ENCODE measurements at regions of chr12 and their contacts with region 1.

Region 1: DNA sequence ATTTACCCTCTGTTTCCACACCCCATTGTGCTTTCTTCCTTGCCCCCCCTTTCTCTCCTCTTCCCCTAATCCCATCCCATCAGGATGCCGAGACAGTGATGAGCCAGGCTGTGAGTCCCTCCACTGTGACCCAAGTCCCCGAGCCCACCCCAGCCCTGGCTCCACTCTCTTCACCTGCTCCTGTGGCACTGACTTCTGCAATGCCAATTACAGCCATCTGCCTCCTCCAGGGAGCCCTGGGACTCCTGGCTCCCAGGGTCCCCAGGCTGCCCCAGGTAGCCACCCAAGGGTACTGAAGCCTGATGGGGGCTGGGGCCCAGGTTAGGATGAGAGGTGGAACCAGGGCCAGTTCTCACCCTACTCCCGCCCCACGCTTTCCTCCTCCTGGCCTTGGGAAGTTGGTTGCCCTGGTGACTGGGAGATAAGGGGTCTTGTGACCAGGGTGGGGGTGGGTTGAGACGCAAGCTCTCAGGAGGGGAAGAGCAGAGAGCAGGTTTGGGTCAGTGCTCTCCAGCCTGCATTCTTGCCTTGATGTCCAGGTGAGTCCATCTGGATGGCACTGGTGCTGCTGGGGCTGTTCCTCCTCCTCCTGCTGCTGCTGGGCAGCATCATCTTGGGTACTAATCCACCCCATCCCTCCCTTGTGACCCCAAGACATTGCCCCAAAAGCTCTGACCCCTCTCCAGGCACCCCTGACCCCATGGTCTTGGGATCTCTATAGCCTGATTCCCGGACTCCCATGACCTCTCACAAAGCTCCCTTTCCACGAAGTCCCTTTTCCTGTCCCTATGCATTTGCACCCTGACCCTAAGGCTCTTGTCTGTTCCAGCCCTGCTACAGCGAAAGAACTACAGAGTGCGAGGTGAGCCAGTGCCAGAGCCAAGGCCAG is 1.2 kb downstream of the AMHR2 start:
- H3K4me3 Mint-ChIP-seq: no peak overlapping the region
- H3K27ac Mint-ChIP-seq: no peak overlapping the region
- H3K4me1 Mint-ChIP-seq: peaks cover 14% of the 10 kb centered on the region
- H3K27me3 Mint-ChIP-seq: peaks cover 21% of the 10 kb centered on the region

Region 2: DNA sequence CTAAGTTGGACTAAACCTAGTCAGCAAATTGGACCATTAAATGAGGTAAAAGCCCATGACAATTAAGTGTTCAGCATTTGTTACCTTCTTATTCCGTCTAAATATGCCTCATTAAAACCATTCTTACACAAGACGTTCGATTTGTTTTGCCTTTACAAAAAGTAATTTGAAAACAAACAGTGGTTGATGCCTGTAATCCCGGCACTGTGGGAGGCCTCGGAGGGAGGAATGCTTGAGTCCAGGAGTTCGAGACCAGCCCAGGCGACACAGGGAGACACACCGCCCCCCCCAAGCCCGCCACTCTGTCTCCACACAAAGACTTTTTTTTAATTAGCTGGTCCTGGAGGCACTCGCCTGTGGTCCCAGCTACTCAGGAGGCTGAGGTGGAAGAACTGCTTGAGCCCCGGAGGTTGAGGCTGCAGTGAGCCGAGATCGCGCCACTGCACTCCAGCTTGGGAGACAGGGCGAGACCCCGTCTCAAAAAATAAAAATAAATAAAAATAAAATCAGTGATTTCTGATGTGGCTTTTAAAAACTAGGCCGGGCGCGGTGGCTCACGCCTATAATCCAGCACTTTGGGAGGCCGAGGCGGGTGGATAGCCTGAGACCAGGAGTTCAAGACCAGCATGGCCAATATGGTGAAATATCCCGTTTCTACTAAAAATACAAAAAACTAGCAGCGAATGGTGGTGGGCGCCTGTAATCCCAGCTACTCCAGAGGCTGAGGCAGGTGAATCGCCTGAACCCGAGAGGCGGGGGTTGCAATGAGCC is 419.5 kb before region 1 on chr12:
- intact Hi-C with region 1: no loop called
- H3K4me3 Mint-ChIP-seq: peak overlapping the region; percentile 94
- H3K27ac Mint-ChIP-seq: peak overlapping the region; percentile 99
- H3K4me1 Mint-ChIP-seq: peaks cover 26% of the 10 kb centered on the region
- H3K27me3 Mint-ChIP-seq: peaks cover 4% of the 10 kb centered on the region

Region 3: GRCh38 chr12:53379389-53380103 is 45.3 kb before region 1 on chr12:
- intact Hi-C with region 1: loop called (anchors 5 kb)
- H3K4me3 Mint-ChIP-seq: no peak overlapping the region
- H3K27ac Mint-ChIP-seq: no peak overlapping the region
- H3K4me1 Mint-ChIP-seq: peaks cover 48% of the 10 kb centered on the region
- H3K27me3 Mint-ChIP-seq: no peaks in the 10 kb centered on the region

Measured in dendritic cell treated with granulocyte-macrophage colony-stimulating factor and Interleukin-4, amounts not matched to agents 40 ng/mL and 50 ng/mL, for 4 days (primary cell).